Activated CD4-positive, alpha-beta memory T cell treated with anti-CD3 and anti-CD28 coated beads for 36 hours (primary cell): ENCODE measurements at regions of chr19 and their contacts with region 1.

Region 1: GRCh38 chr19:39970675-39971379 is at the start of gene PSMC4:
- DNase-seq: peak; percentile 99
- H3K4me3 Mint-ChIP-seq: peak within 1 kb of the TSS; percentile 95
- H3K27ac Mint-ChIP-seq: peak within 1 kb of the TSS; percentile 98
- H3K4me1 Mint-ChIP-seq: peaks cover 51% of the 10 kb centered on the region
- H3K27me3 Mint-ChIP-seq: no peaks in the 10 kb centered on the region
- total RNA-seq, gene PSMC4: 105 to 107 TPM

Region 2: DNA sequence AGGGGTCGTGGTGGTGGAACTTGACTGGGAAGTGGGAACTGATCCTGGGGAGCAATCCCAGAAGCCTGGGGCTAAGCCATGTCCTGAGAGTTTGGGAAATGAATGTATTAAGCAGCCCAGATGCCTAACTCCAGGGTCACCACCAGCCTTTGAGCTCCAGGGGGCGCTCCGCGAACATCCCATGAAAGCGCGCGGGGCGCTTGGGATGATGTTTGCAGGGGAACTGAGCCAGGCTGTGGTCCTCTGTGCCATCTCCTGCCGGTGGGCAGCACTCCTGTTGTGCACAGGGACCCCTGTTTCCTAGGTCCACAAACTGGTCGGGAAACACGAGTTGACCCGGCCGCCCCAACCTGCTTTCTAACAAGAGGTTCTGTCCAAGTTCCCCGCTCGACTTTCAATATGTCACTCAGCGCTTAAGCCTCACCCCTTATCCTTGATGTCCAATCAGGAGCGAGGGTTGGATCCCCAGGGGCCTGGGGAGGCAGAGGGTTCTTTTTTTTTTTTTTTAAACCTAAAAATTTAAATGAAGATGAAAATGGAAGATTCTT is 177.8 kb before region 1 on chr19:
- CTCF ChIA-PET with region 1: interaction called, 21 read pairs
- POLR2A ChIA-PET with region 1: no interaction called
- intact Hi-C with region 1: no loop called
- DNase-seq: peak; percentile 83
- H3K4me3 Mint-ChIP-seq: peak overlapping the region; percentile 73
- H3K27ac Mint-ChIP-seq: no peak overlapping the region
- H3K4me1 Mint-ChIP-seq: peaks cover 9% of the 10 kb centered on the region
- H3K27me3 Mint-ChIP-seq: peaks cover 2% of the 10 kb centered on the region

Region 3: GRCh38 chr19:39906820-39907611 is 63.8 kb before region 1 on chr19:
- CTCF ChIA-PET with region 1: interaction called, 19 read pairs
- POLR2A ChIA-PET with region 1: no interaction called
- intact Hi-C with region 1: no loop called
- DNase-seq: no peak
- H3K4me3 Mint-ChIP-seq: no peak overlapping the region
- H3K27ac Mint-ChIP-seq: no peak overlapping the region
- H3K4me1 Mint-ChIP-seq: peaks cover 9% of the 10 kb centered on the region
- H3K27me3 Mint-ChIP-seq: no peaks in the 10 kb centered on the region

Region 4: DNA sequence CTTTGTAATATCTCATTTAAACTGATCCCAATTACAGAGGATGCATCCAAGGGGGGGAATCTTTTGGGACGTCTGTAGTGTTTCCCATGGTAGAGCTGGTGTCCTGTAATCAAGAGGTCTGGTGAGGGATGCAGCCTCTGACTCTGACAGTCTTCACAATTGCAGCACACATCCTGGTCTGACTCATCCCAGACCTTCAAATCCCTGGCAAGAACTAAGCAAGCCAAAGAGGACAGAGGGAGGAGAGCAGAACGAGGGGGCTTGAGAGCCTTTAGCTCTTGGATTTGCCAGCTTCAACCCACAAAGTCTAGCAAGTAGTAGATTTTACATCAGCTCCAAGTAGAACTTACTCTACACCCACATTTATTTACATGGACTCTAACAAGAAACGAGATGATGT is 19.1 kb before region 1 on chr19:
- CTCF ChIA-PET with region 1: interaction called, 12 read pairs
- POLR2A ChIA-PET with region 1: interaction called, 14 read pairs
- intact Hi-C with region 1: loop called (anchors 2 kb)
- DNase-seq: no peak
- H3K4me3 Mint-ChIP-seq: no peak overlapping the region
- H3K27ac Mint-ChIP-seq: peak overlapping the region; percentile 89
- H3K4me1 Mint-ChIP-seq: peaks cover 71% of the 10 kb centered on the region
- H3K27me3 Mint-ChIP-seq: no peaks in the 10 kb centered on the region

Region 5: DNA sequence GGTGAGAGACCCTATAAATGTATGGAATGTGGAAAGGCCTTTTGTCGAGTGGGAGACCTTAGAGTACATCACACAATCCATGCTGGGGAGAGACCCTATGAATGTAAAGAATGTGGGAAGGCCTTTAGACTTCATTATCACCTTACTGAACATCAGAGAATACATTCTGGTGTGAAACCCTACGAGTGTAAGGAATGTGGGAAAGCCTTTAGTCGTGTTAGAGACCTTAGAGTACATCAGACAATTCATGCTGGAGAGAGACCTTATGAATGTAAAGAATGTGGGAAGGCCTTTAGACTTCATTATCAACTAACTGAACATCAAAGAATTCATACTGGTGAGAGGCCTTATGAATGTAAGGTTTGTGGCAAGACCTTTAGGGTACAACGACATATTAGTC is 43.2 kb after region 1 on chr19:
- CTCF ChIA-PET with region 1: no interaction called
- POLR2A ChIA-PET with region 1: no interaction called
- intact Hi-C with region 1: no loop called
- DNase-seq: no peak
- H3K4me3 Mint-ChIP-seq: no peak overlapping the region
- H3K27ac Mint-ChIP-seq: no peak overlapping the region
- H3K4me1 Mint-ChIP-seq: no peaks in the 10 kb centered on the region
- H3K27me3 Mint-ChIP-seq: no peaks in the 10 kb centered on the region

Region 6: DNA sequence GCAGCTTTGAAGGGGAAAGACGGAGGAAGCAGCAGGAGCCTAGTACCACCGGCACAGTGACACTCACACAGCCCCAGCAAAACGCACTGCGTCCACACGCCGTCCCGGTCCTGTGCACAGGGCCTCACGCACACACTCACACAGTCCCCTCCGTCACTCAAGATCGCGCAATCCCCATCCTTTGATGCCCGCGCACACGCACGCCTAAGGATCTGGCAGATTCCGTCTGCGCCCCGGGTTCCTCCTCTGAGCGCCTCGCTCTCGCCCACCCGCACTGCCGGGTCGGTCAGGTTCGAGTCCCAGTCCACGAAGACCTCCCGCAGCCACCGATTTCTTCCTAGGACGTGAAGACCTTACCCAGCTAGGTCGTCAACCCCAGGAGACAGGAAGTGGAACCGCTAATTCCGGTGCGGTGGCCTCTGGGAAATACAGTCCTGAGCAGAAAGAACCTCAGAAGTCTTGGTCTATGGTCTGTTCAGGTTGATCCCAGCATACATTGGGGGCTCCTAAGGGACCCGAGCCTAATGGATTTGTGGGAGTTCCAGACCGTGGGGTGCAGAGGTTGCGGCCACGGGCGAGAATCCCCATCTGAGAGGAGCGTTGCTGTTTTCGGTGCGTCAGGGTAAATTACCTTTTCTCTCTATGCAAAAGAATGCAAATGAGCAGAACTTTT is 85.1 kb after region 1 on chr19 and contains the start of gene ZNF780B:
- CTCF ChIA-PET with region 1: interaction called, 7 read pairs
- POLR2A ChIA-PET with region 1: interaction called, 13 read pairs
- intact Hi-C with region 1: no loop called
- DNase-seq: peak; percentile 85
- H3K4me3 Mint-ChIP-seq: peak within 1 kb of the TSS; percentile 99
- H3K27ac Mint-ChIP-seq: peak within 1 kb of the TSS; percentile 93
- H3K4me1 Mint-ChIP-seq: peaks cover 38% of the 10 kb centered on the region
- H3K27me3 Mint-ChIP-seq: peaks cover 1% of the 10 kb centered on the region
- total RNA-seq, gene ZNF780B: 11.8 to 13.9 TPM